Transverse colon (tissue), 4 donors: ENCODE measurements at regions of chr3 and their contacts with region 1.

Region 1: DNA sequence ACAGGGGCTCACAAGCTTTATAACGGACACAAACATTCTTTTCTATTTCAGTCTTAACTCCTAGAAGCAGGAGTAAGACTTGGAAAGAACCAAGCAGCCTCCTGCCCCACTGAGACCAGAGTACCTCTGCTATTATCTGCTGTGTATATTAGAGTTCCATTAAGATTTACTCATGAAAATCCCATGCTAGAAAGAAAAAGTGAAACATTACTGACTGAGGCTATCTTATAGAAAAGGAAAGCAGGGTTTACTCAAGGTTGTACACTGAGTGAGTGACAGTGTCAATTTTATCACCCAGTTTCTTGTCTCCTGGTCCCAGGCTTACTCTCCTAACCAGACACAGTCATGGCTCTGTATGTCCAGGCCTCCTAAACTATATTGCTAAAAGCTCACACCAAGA is 97.9 kb upstream of the SOX2 start:
- DNase-seq: no peak
- H3K4me3 ChIP-seq: no peak overlapping the region
- H3K27ac ChIP-seq: no peak overlapping the region
- H3K4me1 ChIP-seq: no peaks in the 10 kb centered on the region
- H3K27me3 ChIP-seq: no peaks in the 10 kb centered on the region
- CTCF ChIP-seq: no peak
- EP300 ChIP-seq: no peak
- POLR2A ChIP-seq: no peak

Region 2: DNA sequence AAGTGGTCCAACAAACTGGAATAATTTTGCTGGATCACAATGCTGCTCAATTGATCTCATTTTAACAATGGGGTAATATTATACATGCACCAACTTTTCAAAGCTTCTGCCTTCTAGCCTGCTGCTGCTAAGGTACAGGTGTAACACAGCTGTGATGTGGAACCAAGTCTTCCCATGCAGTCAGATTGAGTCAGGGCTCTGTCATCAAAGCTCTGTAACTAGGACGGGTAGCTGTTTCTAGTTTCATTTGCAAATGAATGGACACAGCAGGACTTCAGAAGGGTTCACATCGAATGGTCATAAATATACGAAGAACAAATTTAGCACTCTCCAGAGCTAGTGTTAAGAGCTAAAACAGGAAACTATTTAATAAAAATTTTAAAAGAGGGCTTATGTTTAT is 1771.8 kb before region 1 on chr3:
- in situ Hi-C with region 1: no loop called
- intact Hi-C with region 1: no loop called
- DNase-seq: no peak
- H3K4me3 ChIP-seq: no peak overlapping the region
- H3K27ac ChIP-seq: no peak overlapping the region
- H3K4me1 ChIP-seq: no peaks in the 10 kb centered on the region
- H3K27me3 ChIP-seq: no peaks in the 10 kb centered on the region
- CTCF ChIP-seq: no peak
- EP300 ChIP-seq: no peak
- POLR2A ChIP-seq: no peak

Region 3: DNA sequence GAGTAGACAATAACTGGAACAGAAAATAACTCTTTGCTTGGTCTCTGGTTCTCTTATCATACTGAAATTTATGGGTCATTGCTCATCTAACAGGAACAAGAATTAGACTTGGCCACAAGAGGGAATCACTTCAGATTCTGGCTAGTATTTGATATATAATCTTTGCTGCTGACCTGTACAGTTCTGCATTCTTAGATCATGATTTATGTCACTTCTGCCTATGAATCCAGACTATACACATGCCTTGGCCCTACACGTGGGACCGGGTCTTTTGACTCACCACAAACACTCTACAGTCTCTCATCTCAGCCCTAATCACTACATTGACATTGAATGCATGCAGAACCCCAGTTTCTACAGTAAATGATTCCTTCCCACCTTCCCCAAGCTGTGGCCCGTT is 64.5 kb before region 1 on chr3:
- in situ Hi-C with region 1: no loop called
- intact Hi-C with region 1: no loop called
- DNase-seq: no peak
- H3K4me3 ChIP-seq: no peak overlapping the region
- H3K27ac ChIP-seq: no peak overlapping the region
- H3K4me1 ChIP-seq: no peaks in the 10 kb centered on the region
- H3K27me3 ChIP-seq: no peaks in the 10 kb centered on the region
- CTCF ChIP-seq: no peak
- EP300 ChIP-seq: no peak
- POLR2A ChIP-seq: no peak

Region 4: GRCh38 chr3:181570472-181570871 is 43.3 kb before region 1 on chr3:
- in situ Hi-C with region 1: no loop called
- intact Hi-C with region 1: loop called (anchors 1 kb)
- DNase-seq: no peak
- H3K4me3 ChIP-seq: no peak overlapping the region
- H3K27ac ChIP-seq: no peak overlapping the region
- H3K4me1 ChIP-seq: no peaks in the 10 kb centered on the region
- H3K27me3 ChIP-seq: no peaks in the 10 kb centered on the region
- CTCF ChIP-seq: no peak
- EP300 ChIP-seq: no peak
- POLR2A ChIP-seq: no peak

Region 5: GRCh38 chr3:181660337-181660736 is 46.5 kb after region 1 on chr3:
- in situ Hi-C with region 1: no loop called
- intact Hi-C with region 1: loop called (anchors 2 kb)
- DNase-seq: no peak
- H3K4me3 ChIP-seq: no peak overlapping the region
- H3K27ac ChIP-seq: no peak overlapping the region
- H3K4me1 ChIP-seq: no peaks in the 10 kb centered on the region
- H3K27me3 ChIP-seq: no peaks in the 10 kb centered on the region
- CTCF ChIP-seq: no peak
- EP300 ChIP-seq: no peak
- POLR2A ChIP-seq: no peak

Region 6: DNA sequence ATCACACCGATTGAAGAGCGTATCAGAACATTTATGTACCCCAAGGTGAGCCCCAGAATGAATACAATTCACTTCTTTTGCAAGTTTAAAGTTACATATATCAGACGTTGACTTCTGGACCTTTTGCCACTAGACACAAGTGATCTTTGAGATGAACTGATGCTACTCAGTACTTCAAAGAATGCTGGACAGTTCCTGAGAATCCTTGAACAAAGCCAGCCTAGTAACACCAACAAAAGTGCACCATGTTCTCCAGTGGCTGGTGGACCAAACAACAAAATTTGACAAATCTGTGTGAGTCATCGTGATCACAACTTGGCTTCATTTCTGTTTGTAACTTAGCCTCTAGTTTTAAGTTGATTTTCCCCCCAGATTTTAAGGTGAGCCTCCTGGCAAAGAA is 453.6 kb after region 1 on chr3:
- in situ Hi-C with region 1: no loop called
- intact Hi-C with region 1: no loop called
- DNase-seq: no peak
- H3K4me3 ChIP-seq: no peak overlapping the region
- H3K27ac ChIP-seq: no peak overlapping the region
- H3K4me1 ChIP-seq: no peaks in the 10 kb centered on the region
- H3K27me3 ChIP-seq: no peaks in the 10 kb centered on the region
- CTCF ChIP-seq: no peak
- EP300 ChIP-seq: no peak
- POLR2A ChIP-seq: no peak